HEK293T (cell line): ENCODE measurements at regions of chr16 and their contacts with region 1.

Region 1: GRCh38 chr16:2047330-2048115 is at the starts of genes NTHL1 and TSC2:
- DNase-seq: peak; percentile 100

Region 2: DNA sequence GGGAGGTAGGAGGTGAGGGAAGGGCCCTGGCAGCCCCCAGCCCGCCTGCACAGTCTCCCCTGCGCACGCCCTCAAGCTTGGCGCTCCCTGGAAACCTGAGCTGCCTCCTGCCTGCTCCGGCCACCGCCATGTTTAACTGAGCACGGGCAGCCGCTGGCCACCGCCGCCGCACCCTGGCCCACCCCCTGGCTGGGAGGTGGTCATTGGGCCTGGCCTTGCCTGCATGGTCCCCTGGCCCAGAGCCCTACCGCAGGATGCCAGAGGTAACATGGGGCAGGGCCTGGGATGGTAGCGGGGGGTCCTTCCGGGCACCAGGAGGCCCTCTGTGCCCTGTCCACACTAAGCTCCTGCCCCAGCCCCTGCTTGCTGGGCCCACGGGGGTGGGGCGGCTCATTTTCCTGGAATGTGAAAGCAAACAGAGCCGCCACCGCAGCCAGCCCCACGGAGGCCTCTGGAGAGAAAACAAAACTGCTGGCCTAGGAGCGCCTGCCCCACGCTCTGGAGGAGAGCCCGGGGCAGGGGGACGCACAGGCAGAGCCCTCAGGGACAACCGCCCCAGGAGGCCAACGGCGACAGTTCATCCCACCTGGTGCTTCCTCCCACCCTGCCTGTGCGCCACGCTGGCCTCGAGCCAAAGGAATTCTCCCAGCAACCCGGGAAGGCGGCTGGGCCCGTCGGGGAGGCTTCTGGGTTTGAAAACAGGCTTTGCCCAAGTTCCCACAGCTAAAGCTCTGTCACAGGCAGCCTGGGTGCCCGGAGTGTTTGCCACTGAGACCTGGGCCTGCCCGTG is 11.9 kb before region 1 on chr16:
- CTCF ChIA-PET with region 1: interaction called, 3 read pairs
- POLR2A ChIA-PET with region 1: interaction called, 10 read pairs
- DNase-seq: no peak

Region 3: DNA sequence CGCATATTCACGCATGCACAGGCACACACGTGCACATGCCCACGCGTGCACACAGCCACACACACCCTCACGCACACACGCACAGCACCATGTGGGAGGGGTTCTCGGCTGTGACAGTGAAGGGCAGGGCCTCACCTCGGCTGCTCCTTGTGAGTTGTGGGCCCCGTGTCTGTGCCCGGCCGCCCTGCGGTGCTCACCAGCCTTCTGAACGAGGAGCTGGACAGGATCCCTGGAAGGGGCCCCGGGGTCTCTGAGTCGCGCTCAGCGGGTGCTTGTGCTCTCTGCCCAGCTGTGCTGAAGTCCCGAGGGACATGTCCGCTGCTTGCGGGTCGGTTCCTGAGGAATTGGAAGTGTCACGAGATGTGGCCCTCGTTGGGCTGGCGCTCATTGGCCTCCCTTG is 16.3 kb after region 1 on chr16:
- CTCF ChIA-PET with region 1: no interaction called
- POLR2A ChIA-PET with region 1: interaction called, 15 read pairs
- DNase-seq: no peak